CD4-positive, alpha-beta T cell (primary cell): ENCODE measurements at regions of chr1 and their contacts with region 1.

Region 1: GRCh38 chr1:154176337-154176736 is 15.6 kb downstream of the TPM3 start:
- DNase-seq: no peak
- ATAC-seq: no peak
- H3K4me3 ChIP-seq: no peak overlapping the region
- H3K4me3 Mint-ChIP-seq: no peak overlapping the region
- H3K27ac ChIP-seq: peak overlapping the region; percentile 44 to 50
- H3K27ac Mint-ChIP-seq: peak overlapping the region; percentile 74
- H3K4me1 ChIP-seq: peaks cover 60% of the 10 kb centered on the region
- H3K4me1 Mint-ChIP-seq: peaks cover 78% of the 10 kb centered on the region
- H3K27me3 ChIP-seq: no peaks in the 10 kb centered on the region
- H3K27me3 Mint-ChIP-seq: no peaks in the 10 kb centered on the region
- CTCF ChIP-seq: no peak

Region 2: GRCh38 chr1:153253693-153254092 is 922.6 kb before region 1 on chr1:
- CTCF ChIA-PET with region 1: no interaction called
- POLR2A ChIA-PET with region 1: no interaction called
- intact Hi-C with region 1: no loop called
- DNase-seq: no peak
- ATAC-seq: no peak
- H3K4me3 ChIP-seq: no peak overlapping the region
- H3K4me3 Mint-ChIP-seq: no peak overlapping the region
- H3K27ac ChIP-seq: no peak overlapping the region
- H3K27ac Mint-ChIP-seq: no peak overlapping the region
- H3K4me1 ChIP-seq: no peaks in the 10 kb centered on the region
- H3K4me1 Mint-ChIP-seq: peaks cover under 1% of the 10 kb centered on the region
- H3K27me3 ChIP-seq: peaks cover 4 to 11% of the 10 kb centered on the region in 2 experiments
- H3K27me3 Mint-ChIP-seq: peaks cover 25% of the 10 kb centered on the region
- CTCF ChIP-seq: no peak

Region 3: GRCh38 chr1:154019269-154019668 is 157.1 kb before region 1 on chr1:
- CTCF ChIA-PET with region 1: no interaction called
- POLR2A ChIA-PET with region 1: no interaction called
- intact Hi-C with region 1: no loop called
- DNase-seq: no peak
- ATAC-seq: no peak
- H3K4me3 ChIP-seq: no peak overlapping the region
- H3K4me3 Mint-ChIP-seq: no peak overlapping the region
- H3K27ac ChIP-seq: no peak overlapping the region
- H3K27ac Mint-ChIP-seq: no peak overlapping the region
- H3K4me1 ChIP-seq: no peaks in the 10 kb centered on the region
- H3K4me1 Mint-ChIP-seq: no peaks in the 10 kb centered on the region
- H3K27me3 ChIP-seq: no peaks in the 10 kb centered on the region
- H3K27me3 Mint-ChIP-seq: no peaks in the 10 kb centered on the region
- CTCF ChIP-seq: no peak

Region 4: DNA sequence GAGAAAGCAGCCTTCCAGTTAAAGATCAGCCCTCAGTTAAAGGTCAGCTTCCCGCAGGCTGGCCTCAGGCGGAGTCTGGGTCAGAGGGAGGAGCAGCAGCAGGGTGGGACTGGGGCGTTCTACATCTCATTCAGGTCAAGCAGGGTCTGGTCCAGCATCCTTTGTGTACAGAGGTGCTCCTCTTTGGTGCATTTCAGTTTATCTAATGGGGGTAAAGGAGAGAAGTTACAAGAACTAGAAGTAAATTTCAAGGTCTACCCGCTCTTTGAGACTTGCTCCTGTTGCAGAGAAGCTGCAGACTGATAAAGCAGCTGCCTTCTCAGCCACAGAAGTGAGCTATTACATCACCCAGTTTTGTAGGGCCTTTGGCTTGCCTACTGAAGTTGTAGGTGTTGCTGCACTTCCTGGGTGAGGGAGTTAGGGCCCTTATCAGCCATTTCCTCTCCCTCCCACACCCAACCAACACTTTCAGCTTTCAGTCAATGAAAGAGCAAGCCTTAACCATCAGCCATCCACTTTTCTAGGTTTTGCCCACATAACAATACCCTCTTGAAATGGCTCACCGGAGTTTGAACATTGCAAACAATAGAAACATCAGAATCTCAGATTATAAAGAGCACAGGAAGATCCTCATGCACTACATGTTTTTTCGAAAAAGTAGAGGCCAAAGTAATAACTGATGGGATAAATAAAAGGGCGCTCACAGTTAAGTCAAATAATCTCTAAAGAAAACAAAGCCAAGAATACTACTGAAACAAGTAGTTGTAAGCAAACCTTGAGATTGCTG is 18.6 kb before region 1 on chr1:
- CTCF ChIA-PET with region 1: interaction called, 3 read pairs
- POLR2A ChIA-PET with region 1: interaction called, 41 read pairs
- intact Hi-C with region 1: no loop called
- DNase-seq: peak; percentile 49 to 91 (median 65)
- ATAC-seq: peak; percentile 98
- H3K4me3 ChIP-seq: no peak overlapping the region
- H3K4me3 Mint-ChIP-seq: peak overlapping the region; percentile 74
- H3K27ac ChIP-seq: peak overlapping the region; percentile 55 to 68
- H3K27ac Mint-ChIP-seq: peak overlapping the region; percentile 92
- H3K4me1 ChIP-seq: peaks cover 53% of the 10 kb centered on the region
- H3K4me1 Mint-ChIP-seq: peaks cover 74% of the 10 kb centered on the region
- H3K27me3 ChIP-seq: no peaks in the 10 kb centered on the region
- H3K27me3 Mint-ChIP-seq: no peaks in the 10 kb centered on the region
- CTCF ChIP-seq: no peak

Region 5: GRCh38 chr1:154166207-154166606 is 10.1 kb before region 1 on chr1:
- CTCF ChIA-PET with region 1: interaction called, 3 read pairs
- POLR2A ChIA-PET with region 1: interaction called, 12 read pairs
- intact Hi-C with region 1: no loop called
- DNase-seq: no peak
- ATAC-seq: no peak
- H3K4me3 ChIP-seq: no peak overlapping the region
- H3K4me3 Mint-ChIP-seq: no peak overlapping the region
- H3K27ac ChIP-seq: no peak overlapping the region
- H3K27ac Mint-ChIP-seq: no peak overlapping the region
- H3K4me1 ChIP-seq: no peaks in the 10 kb centered on the region
- H3K4me1 Mint-ChIP-seq: peaks cover 41% of the 10 kb centered on the region
- H3K27me3 ChIP-seq: no peaks in the 10 kb centered on the region
- H3K27me3 Mint-ChIP-seq: no peaks in the 10 kb centered on the region
- CTCF ChIP-seq: no peak